Endothelial cell of umbilical vein (primary cell): ENCODE measurements at regions of chr3 and their contacts with region 1.

Region 1: DNA sequence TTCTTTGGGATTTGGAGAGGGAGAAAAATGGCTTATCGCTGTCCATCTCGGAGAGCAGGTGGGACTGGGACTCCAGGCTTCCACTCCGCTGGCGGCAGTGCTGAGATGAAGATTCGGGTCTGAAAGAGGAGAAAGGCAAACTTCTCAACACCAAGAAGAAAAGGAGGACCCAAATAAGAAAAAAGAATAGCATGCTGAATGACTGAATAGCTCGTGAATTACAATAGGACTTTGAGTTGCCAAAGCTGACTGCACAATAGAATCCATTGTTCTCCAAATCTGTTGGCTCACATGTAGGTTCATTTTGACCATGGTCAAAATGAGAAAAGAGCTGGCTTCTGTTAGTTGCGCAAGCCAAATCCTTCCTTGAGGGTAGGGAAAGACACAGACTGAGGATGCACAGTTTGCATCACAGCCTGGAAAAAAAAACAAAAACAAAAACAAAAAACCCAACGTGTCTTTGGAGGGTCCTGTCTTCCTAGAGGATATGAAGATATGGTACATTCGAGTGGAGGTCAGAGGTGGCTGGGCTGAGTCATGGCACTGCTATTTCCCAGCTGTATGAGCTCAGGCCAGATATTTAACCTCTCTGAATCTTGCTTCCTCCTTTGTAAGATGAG is 59.3 kb upstream of the LMOD3 start:
- DNase-seq: peak; percentile 98
- H3K4me3 ChIP-seq: no peak overlapping the region
- H3K27ac ChIP-seq: peak overlapping the region; percentile 93
- H3K4me1 ChIP-seq: peaks cover 59% of the 10 kb centered on the region
- H3K27me3 ChIP-seq: no peaks in the 10 kb centered on the region
- CTCF ChIP-seq: no peak
- POLR2A ChIP-seq: peak; percentile 31

Region 2: GRCh38 chr3:68861521-68862296 is 320.0 kb before region 1 on chr3:
- CTCF ChIA-PET with region 1: no interaction called
- POLR2A ChIA-PET with region 1: no interaction called
- dilution Hi-C with region 1: no loop called
- intact Hi-C with region 1: no loop called
- DNase-seq: no peak
- H3K4me3 ChIP-seq: no peak overlapping the region
- H3K27ac ChIP-seq: no peak overlapping the region
- H3K4me1 ChIP-seq: no peaks in the 10 kb centered on the region
- H3K27me3 ChIP-seq: peaks cover 0 to 3% of the 10 kb centered on the region in 2 experiments
- CTCF ChIP-seq: no peak
- POLR2A ChIP-seq: no peak

Region 3: DNA sequence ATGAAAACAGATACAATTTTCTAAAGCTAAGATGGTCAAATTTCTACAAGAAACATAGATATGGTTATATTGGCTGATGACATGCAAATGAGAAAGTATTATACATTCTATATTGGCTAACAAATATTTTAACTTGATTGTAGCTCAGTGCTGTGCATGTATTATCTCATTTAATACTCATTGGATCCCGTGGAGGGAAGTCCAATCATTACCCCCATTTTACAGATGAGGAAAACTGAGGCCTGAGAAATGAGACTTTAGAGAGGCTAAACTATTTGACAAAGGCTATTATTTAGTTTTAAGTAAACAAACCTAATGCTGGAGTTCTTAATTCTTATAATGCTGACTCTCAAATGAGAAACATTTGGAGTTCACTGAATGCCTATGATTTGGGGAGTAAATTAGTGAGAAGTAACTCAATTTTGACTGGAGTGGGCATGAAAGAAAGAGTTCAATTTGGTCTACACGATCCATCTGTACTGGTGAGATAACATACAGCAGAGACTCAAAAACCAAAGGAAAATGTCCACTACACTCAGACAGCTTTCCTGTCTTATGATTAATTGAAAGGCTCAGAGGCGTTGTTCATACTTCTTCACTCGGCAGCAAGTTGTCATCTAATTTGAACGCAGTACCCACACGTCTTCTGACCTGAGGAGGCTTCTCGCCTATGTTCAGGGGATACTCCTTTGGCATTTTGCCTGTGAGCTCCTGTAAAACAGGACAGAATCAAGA is 12.9 kb after region 1 on chr3:
- CTCF ChIA-PET with region 1: interaction called, 7 read pairs
- POLR2A ChIA-PET with region 1: no interaction called
- dilution Hi-C with region 1: no loop called
- intact Hi-C with region 1: loop called (anchors 1 kb)
- DNase-seq: peak; percentile 79
- H3K4me3 ChIP-seq: no peak overlapping the region
- H3K27ac ChIP-seq: peak overlapping the region; percentile 32
- H3K4me1 ChIP-seq: peaks cover 37% of the 10 kb centered on the region
- H3K27me3 ChIP-seq: no peaks in the 10 kb centered on the region
- CTCF ChIP-seq: no peak
- POLR2A ChIP-seq: no peak

Region 4: DNA sequence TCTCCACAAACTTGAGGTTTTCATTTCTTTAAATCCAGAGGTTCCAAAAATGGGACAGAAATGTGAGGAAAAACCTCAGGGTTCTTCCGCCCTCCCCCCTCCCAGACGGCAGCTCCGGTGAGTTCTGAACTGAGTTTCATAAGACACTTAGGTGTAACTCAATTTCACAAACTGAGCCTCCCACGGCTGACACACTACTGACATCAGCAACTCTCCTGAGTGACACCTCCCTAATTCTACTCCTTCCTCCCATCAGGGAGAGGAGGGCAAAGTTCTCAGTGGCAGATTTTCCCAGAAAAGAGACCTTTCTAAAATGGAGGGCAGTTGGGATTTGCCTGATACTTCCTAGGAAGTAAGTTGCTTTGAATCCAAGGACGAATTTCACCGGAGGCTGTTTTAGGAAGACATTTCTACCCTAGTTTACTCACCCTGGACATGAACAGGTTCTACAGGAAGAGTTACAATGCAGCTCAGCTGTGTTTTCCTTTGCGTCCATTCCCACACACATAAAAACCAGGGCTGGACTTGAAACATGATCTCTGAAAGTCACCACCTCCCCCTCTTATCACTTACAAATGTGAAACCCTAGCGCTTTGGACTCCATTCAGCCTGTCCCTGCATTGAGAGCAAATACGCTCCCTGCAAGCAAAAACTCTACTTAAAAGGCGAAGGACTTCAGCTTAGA is 18.8 kb after region 1 on chr3:
- CTCF ChIA-PET with region 1: interaction called, 13 read pairs
- POLR2A ChIA-PET with region 1: no interaction called
- dilution Hi-C with region 1: no loop called
- intact Hi-C with region 1: loop called (anchors 2 kb)
- DNase-seq: peak; percentile 94
- H3K4me3 ChIP-seq: peak overlapping the region in 2 of 3 experiments; percentile 48 to 88
- H3K27ac ChIP-seq: peak overlapping the region; percentile 88
- H3K4me1 ChIP-seq: peaks cover 56% of the 10 kb centered on the region
- H3K27me3 ChIP-seq: no peaks in the 10 kb centered on the region
- CTCF ChIP-seq: no peak
- POLR2A ChIP-seq: no peak

Region 5: GRCh38 chr3:69212411-69213139 is 30.9 kb after region 1 on chr3:
- CTCF ChIA-PET with region 1: interaction called, 5 read pairs
- POLR2A ChIA-PET with region 1: interaction called, 5 read pairs
- dilution Hi-C with region 1: no loop called
- intact Hi-C with region 1: loop called (anchors 1 kb)
- DNase-seq: peak; percentile 94
- H3K4me3 ChIP-seq: no peak overlapping the region
- H3K27ac ChIP-seq: peak overlapping the region; percentile 68
- H3K4me1 ChIP-seq: peaks cover 39% of the 10 kb centered on the region
- H3K27me3 ChIP-seq: no peaks in the 10 kb centered on the region
- CTCF ChIP-seq: no peak
- POLR2A ChIP-seq: no peak

Region 6: DNA sequence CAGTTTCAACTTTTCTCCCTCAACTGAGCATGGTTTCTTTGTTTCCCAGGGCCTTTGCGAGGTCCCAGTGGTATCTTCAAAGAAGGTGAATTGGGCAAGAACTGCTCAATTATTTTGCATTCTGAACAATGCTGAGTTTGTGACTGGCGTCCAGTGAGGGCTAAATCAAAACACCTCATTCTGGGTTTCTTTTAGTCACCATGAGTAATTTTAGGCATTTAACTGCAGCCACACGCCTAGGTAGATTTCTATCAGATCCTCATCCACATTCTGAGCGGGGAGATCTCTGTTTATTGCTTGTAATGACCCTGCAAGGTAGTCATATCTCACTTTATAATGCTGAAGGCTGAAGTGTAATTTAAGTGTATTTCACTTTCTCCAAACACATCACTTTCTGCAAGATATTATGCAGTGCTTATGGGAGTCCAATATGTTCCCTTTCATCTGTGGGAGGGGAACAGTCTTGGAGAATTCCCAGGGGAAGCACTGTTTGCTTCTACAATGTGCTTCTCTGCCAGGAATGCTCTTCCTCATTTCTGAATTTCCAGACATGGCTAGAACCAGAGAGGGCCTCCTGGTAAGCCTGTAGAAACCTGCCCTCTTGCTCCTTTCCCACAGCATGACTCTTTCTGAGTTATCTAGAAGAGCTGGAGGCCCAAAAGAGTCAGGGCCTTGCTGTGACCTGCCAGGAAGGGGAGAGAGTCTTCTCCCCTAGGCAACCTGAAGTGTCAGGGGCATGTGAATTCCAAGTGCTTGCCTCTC is 112.5 kb after region 1 on chr3:
- CTCF ChIA-PET with region 1: interaction called, 7 read pairs
- POLR2A ChIA-PET with region 1: no interaction called
- dilution Hi-C with region 1: no loop called
- intact Hi-C with region 1: loop called (anchors 1 kb)
- DNase-seq: no peak
- H3K4me3 ChIP-seq: no peak overlapping the region
- H3K27ac ChIP-seq: no peak overlapping the region
- H3K4me1 ChIP-seq: peaks cover 20% of the 10 kb centered on the region
- H3K27me3 ChIP-seq: no peaks in the 10 kb centered on the region
- CTCF ChIP-seq: no peak
- POLR2A ChIP-seq: no peak

Region 7: DNA sequence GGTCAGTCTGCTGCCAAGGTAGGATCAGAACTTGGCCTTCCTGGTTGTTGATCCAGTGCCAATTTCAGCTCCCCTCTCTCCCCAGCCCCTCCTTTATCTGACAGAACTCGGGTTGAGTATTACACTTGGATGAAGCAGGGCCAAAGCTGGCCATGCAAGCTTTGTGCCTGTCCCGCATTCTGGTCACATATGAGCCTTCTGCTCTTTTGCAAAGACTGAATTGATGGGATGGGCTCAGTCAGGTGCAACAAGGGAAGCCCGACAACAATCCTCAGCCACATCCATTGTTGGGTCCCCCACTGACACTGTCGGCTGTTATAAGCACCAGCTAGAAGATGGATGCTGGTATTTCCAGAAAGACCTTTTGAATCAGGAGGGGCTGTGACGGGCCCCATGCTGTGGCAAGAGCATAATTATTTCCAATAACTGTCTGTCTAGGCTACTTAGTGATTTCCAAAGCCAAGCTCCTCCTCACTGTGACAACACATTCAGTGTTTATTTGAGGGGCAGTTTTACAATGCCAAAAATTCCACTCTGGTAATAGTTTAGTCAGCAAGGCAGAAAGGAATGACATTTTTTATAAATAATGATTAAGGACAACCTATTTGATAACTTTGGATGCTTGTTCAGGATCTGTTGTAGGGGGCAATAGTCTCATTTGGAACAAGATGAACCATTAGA is 351.0 kb after region 1 on chr3:
- CTCF ChIA-PET with region 1: no interaction called
- POLR2A ChIA-PET with region 1: no interaction called
- dilution Hi-C with region 1: no loop called
- intact Hi-C with region 1: no loop called
- DNase-seq: no peak
- H3K4me3 ChIP-seq: no peak overlapping the region
- H3K27ac ChIP-seq: no peak overlapping the region
- H3K4me1 ChIP-seq: no peaks in the 10 kb centered on the region
- H3K27me3 ChIP-seq: peaks cover 4 to 10% of the 10 kb centered on the region in 2 experiments
- CTCF ChIP-seq: no peak
- POLR2A ChIP-seq: no peak